PC-3 (cell line): ENCODE measurements at regions of chr17 and their contacts with region 1.

Region 1: DNA sequence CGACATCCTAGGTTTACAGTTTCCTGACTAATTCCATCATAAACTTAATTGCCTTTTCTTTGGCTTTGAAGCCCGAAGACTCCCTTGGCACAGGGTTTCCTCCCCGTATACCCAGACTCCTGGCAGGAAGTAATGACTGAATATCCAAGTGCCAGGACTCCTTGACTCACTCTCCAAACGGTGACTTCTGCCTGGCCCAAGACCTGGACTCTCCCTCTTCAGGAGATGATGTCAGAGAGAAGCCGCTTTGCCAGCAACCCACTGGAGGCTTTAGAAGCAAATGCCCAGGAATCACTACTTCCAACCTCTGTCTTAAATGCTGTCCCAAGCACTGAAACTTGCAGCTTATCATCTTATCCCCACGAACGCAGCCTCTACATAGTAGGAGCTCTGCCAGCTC is 146.5 kb downstream of the RGS9 start:
- DNase-seq: peak; percentile 97
- ATAC-seq: peak; percentile 98
- H3K4me3 ChIP-seq: no peak overlapping the region
- H3K27ac ChIP-seq: peak overlapping the region; percentile 79
- H3K4me1 ChIP-seq: peaks cover 18% of the 10 kb centered on the region
- H3K27me3 ChIP-seq: no peaks in the 10 kb centered on the region
- CTCF ChIP-seq: no peak

Region 2: DNA sequence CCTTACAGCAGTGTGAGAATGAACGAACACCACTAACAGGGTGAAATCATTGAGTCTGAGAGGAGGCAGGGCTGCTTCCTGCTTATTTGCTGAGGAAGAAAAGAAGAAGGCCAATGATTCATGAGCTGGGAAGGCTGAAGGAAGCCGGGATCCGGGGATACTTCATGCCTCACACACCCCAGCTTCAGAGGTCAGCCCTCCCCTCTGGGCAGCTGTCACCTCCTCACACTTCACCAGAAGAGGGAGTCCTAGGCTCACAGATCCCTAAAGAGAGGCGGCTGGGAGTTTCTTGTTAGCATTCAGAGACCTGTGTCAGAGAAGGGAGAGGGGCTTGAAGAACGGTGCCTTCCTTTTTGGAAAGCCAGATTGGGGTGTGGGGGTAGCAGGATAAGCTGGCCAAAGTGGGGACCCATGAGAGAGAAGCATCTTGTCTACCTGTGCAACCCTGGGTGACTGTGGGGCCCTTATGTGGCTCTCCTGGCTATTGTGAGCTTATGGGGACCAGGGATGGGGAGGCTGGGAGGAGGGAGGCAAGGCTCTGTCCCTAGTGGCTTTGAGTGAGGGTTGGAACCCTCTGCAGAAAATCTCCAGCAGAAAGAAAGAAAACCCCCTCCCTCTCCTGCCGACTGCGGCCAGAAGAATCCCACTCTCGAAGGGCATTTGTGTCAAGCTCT is 51.9 kb before region 1 on chr17:
- CTCF ChIA-PET with region 1: no interaction called
- POLR2A ChIA-PET with region 1: no interaction called
- intact Hi-C with region 1: loop called (anchors 2 kb)
- DNase-seq: peak; percentile 91
- ATAC-seq: peak; percentile 90
- H3K4me3 ChIP-seq: no peak overlapping the region
- H3K27ac ChIP-seq: no peak overlapping the region
- H3K4me1 ChIP-seq: peaks cover 33% of the 10 kb centered on the region
- H3K27me3 ChIP-seq: no peaks in the 10 kb centered on the region
- CTCF ChIP-seq: peak; percentile 98

Region 3: DNA sequence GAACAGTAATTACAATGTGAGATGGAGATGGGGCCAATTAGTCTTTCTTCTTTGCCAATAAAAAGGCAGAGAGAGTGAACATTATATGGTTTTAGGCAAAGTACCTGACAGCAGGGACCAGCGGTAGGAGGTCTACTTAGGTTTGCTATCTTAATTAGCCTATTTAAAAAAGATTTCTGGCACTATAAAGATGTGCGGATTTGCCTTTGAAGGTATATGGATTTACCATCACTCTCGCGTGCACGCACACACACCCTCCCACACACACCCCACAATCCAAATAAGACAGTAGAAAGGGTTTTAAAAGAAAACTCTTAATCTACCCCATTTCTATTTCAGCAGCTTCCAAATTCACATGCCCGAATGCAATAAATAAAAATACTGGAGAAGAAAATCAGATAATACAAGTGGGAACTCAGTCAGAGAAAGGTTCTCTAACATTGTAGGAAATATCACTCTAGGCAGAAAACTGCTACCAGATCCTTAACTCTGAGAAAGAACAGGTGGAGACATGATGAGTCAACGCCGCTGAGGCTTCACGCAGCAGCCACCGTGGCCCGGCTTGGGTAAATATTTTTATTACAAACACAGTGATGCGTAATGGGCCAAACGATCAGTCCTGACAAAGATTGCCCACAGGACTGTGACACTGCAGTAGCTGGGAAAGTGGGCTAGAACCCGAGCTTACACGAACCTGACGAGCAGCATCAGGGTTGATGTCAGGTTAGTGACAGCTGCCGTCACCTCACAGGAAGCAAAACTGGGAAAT is 344.4 kb after region 1 on chr17:
- CTCF ChIA-PET with region 1: no interaction called
- POLR2A ChIA-PET with region 1: no interaction called
- intact Hi-C with region 1: loop called (anchors 5 kb)
- DNase-seq: peak; percentile 98
- ATAC-seq: peak; percentile 99
- H3K4me3 ChIP-seq: peak overlapping the region; percentile 29; the same call in 1 of the 2 replicates
- H3K27ac ChIP-seq: peak overlapping the region; percentile 63
- H3K4me1 ChIP-seq: peaks cover 25% of the 10 kb centered on the region
- H3K27me3 ChIP-seq: no peaks in the 10 kb centered on the region
- CTCF ChIP-seq: no peak

Region 4: GRCh38 chr17:65820811-65821210 is 537.1 kb after region 1 on chr17:
- CTCF ChIA-PET with region 1: no interaction called
- POLR2A ChIA-PET with region 1: no interaction called
- intact Hi-C with region 1: loop called (anchors 1 kb)
- DNase-seq: no peak
- ATAC-seq: no peak
- H3K4me3 ChIP-seq: no peak overlapping the region
- H3K27ac ChIP-seq: peak overlapping the region; percentile 70
- H3K4me1 ChIP-seq: peaks cover 32% of the 10 kb centered on the region
- H3K27me3 ChIP-seq: no peaks in the 10 kb centered on the region
- CTCF ChIP-seq: no peak